ENCODE measurements at regions of chr11 and their contacts with region 1.

Region 1: DNA sequence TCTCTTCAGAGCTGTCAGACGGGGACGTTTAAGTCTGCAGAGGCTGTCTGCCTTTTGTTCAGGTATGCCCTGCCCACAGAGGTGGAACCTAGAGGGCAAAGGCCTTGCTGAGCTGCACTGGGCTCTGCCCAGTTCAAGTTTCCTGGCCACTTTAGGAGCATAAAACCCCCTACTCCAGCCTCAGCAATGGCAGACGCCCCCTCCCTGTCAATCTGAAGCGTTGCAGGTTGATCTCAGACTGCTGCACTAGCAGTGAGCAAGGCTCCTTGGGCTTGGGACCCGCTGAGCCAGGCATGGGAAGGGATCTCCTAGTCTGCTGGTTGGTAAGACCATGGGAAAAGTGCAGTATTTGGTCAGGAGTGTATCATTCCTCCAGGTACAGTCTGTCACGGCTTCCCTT is 66.6 kb upstream of the TP53I11 start:
- DNase-seq: peak; percentile 10 to 65
- H3K4me3 ChIP-seq: no peak overlapping the region
- H3K27ac ChIP-seq: no peak overlapping the region
- H3K4me1 ChIP-seq: peaks cover 5 to 15% (median 12%) of the 10 kb centered on the region in 4 experiments; a peak in 6 of 7 replicates
- H3K27me3 ChIP-seq: no peaks in the 10 kb centered on the region
- CTCF ChIP-seq: peak; percentile 74 to 87 (median 85)
- EP300 ChIP-seq: no peak
- POLR2A ChIP-seq: no peak
- RAD21 ChIP-seq: peak; percentile 56 to 74

Region 2: GRCh38 chr11:44927174-44927661 is 90.1 kb before region 1 on chr11:
- CTCF ChIA-PET with region 1: interaction called, 18 read pairs
- POLR2A ChIA-PET with region 1: no interaction called
- DNase-seq: peak; percentile 70 to 91
- H3K4me3 ChIP-seq: peak overlapping the region in 1 of 4 experiments; percentile 20; a peak in 1 of 8 replicates
- H3K27ac ChIP-seq: no peak overlapping the region
- H3K4me1 ChIP-seq: peaks cover 0 to 18% (median 13%) of the 10 kb centered on the region in 4 experiments; a peak in 6 of 7 replicates
- H3K27me3 ChIP-seq: no peaks in the 10 kb centered on the region
- CTCF ChIP-seq: peak; percentile 84 to 95 (median 93)
- EP300 ChIP-seq: no peak
- POLR2A ChIP-seq: no peak
- RAD21 ChIP-seq: peak; percentile 86 to 93

Region 3: DNA sequence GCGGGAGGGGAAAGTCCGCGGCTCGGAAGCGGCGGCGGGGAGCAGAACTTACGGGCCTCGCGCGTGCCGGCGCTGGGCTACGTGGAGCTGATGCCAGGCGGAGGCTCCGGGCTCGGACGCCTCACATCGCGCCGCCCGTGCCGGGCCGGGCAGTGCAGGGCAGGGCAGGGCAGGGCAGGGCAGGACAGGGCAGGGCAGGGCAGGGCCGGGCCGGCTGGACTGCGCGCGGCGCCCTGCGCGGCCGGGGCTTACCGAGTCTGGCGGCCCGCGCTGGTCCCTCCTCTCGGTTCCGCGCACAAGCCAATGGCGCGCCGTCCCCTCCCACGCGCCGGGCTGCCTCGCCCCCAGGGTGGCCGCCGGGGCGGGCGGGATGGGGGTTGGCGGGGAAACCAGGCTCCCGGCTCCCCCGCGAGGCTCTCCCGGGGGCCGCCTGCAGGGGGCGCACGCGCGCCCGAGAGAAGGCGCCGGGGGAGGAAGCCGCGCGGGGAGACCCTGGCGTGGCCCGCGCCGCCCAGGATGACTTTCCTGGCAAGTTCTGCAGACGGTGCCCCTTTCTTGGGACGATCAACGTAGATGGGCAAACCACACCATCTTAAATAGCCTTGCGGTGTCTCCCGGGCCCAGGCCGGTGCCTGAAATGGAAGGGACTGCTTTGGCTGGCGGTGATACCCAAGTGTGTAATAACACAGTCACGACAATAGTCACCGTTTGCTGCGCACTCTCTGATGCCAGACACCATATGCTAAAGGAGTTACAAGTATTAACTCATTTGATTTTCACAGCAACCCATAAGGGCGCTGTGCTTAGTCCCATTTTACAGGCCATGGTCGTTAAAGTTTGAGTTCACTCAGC is 66.5 kb before region 1 on chr11 and contains the start of gene TP53I11:
- CTCF ChIA-PET with region 1: interaction called, 10 read pairs
- POLR2A ChIA-PET with region 1: no interaction called
- DNase-seq: no peak
- H3K4me3 ChIP-seq: peak within 1 kb of the TSS; percentile 64 to 78 (median 70)
- H3K27ac ChIP-seq: peak within 1 kb of the TSS; percentile 21; the same call in 1 of the 2 replicates
- H3K4me1 ChIP-seq: peaks cover 12 to 51% (median 31%) of the 10 kb centered on the region in 4 experiments
- H3K27me3 ChIP-seq: no peaks in the 10 kb centered on the region; a peak in 1 of 7 replicates
- CTCF ChIP-seq: peak in 2 of 3 experiments; percentile 33 to 70; a peak in 3 of 4 replicates
- EP300 ChIP-seq: no peak
- POLR2A ChIP-seq: no peak
- RAD21 ChIP-seq: peak; percentile 28 to 57; a peak in 3 of 4 replicates
- total RNA-seq, gene TP53I11: 46.3 and 53.7 TPM in 2 replicates

Region 4: GRCh38 chr11:44977476-44977984 is 39.8 kb before region 1 on chr11:
- CTCF ChIA-PET with region 1: interaction called, 26 read pairs
- POLR2A ChIA-PET with region 1: no interaction called
- DNase-seq: no peak
- H3K4me3 ChIP-seq: no peak overlapping the region
- H3K27ac ChIP-seq: no peak overlapping the region
- H3K4me1 ChIP-seq: peaks cover 0 to 27% (median 18%) of the 10 kb centered on the region in 4 experiments; a peak in 6 of 7 replicates
- H3K27me3 ChIP-seq: no peaks in the 10 kb centered on the region
- CTCF ChIP-seq: peak; percentile 57 to 83 (median 79)
- EP300 ChIP-seq: no peak
- POLR2A ChIP-seq: no peak
- RAD21 ChIP-seq: peak; percentile 48 to 69

Region 5: DNA sequence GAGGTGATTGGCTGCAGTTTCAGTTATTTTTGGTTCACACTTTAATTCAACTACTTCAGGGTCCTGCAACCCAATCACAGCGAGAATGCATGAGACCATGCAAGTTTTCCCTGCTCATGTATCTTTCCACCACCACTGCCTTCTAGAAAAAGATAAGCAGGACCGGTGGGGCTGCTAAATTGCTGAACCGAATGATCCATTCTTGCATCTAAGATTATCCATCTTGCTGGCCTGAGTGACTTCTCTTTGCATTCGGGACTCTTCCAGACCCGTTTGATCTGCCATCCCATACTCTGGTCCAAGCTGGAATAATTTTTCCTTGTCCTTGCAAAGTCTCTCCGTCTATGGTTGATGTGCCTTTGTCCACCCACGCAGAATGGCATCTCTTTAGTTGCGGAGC is 10.3 kb before region 1 on chr11:
- CTCF ChIA-PET with region 1: interaction called, 22 read pairs
- POLR2A ChIA-PET with region 1: no interaction called
- DNase-seq: no peak
- H3K4me3 ChIP-seq: no peak overlapping the region
- H3K27ac ChIP-seq: no peak overlapping the region
- H3K4me1 ChIP-seq: no peaks in the 10 kb centered on the region
- H3K27me3 ChIP-seq: no peaks in the 10 kb centered on the region
- CTCF ChIP-seq: no peak
- EP300 ChIP-seq: no peak
- POLR2A ChIP-seq: no peak
- RAD21 ChIP-seq: no peak

Region 6: DNA sequence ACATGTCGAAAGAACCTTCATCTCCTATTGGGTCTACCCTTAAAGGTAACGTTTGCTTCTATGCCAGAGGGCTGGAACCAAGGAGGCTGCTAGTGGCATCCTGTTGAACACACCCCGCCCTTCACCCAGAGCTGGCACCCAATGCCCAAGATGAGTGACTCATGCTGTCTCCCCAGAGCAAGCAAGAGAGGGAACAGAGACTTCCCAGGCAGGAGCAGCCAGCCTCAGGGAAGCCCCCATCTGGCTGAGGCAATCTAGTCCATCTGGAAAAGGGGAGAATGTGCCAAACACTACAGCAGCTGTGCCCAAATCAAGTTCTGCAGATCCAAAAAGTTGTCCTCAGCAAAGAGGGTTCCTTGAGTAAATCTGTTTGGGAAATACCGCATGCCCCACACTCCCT is 25.2 kb after region 1 on chr11:
- CTCF ChIA-PET with region 1: interaction called, 16 read pairs
- POLR2A ChIA-PET with region 1: no interaction called
- DNase-seq: no peak
- H3K4me3 ChIP-seq: no peak overlapping the region
- H3K27ac ChIP-seq: no peak overlapping the region
- H3K4me1 ChIP-seq: no peaks in the 10 kb centered on the region; a peak in 2 of 7 replicates
- H3K27me3 ChIP-seq: no peaks in the 10 kb centered on the region; a peak in 1 of 7 replicates
- CTCF ChIP-seq: no peak
- EP300 ChIP-seq: no peak
- POLR2A ChIP-seq: no peak
- RAD21 ChIP-seq: no peak

Region 7: DNA sequence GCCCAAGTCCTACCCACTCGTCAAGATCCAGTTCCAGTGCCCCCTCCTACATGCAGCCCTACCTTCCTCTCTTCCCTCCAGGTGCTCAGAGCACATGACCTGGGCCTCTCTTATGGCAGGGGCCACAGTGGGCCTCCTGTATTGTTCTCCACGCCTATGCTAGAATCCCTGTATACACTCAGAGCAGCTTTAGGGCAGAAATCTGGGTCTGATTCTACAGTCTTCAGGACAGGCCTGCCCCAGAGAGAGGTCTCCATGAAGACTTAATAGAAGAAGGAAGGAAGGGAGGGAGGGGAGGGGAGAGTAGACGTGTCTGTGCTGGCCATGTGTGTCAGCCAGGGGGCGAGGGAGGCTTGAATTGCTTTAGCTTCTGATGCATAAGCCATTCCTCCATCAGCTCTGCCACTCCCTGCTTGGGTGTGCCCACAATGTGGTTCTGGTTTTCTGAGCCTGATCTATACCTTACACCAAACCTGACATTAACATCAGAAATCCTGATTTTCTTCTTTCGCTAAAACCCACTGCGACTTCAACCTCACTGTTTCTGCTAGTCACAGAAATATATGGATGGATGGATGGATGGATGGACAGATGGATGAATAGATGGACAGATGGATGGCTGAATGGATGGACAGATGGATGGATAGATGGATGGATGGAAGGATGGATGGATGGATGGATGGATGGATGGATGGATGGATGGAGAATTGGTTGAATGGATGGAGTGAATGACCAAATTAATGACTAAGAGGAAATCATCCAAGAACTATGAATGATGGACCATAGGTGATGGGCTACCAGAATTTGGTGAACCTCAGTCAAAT is 72.6 kb after region 1 on chr11:
- CTCF ChIA-PET with region 1: interaction called, 10 read pairs
- POLR2A ChIA-PET with region 1: no interaction called
- DNase-seq: no peak
- H3K4me3 ChIP-seq: no peak overlapping the region
- H3K27ac ChIP-seq: no peak overlapping the region
- H3K4me1 ChIP-seq: peaks cover 14 to 40% (median 26%) of the 10 kb centered on the region in 4 experiments
- H3K27me3 ChIP-seq: no peaks in the 10 kb centered on the region; a peak in 2 of 7 replicates
- CTCF ChIP-seq: peak; percentile 49 to 83 (median 71)
- EP300 ChIP-seq: no peak
- POLR2A ChIP-seq: no peak
- RAD21 ChIP-seq: peak; percentile 35 to 51; a peak in 3 of 4 replicates